Activated CD4-positive, alpha-beta memory T cell treated with anti-CD3 and anti-CD28 coated beads for 36 hours (primary cell): ENCODE measurements at regions of chr2 and their contacts with region 1.

Region 1: GRCh38 chr2:27281855-27282559 is at the start of gene TRIM54:
- DNase-seq: no peak
- H3K4me3 Mint-ChIP-seq: no peak within 1 kb of the TSS
- H3K27ac Mint-ChIP-seq: no peak within 1 kb of the TSS
- H3K4me1 Mint-ChIP-seq: peaks cover 2% of the 10 kb centered on the region
- H3K27me3 Mint-ChIP-seq: peaks cover 20% of the 10 kb centered on the region
- total RNA-seq, gene TRIM54: not detected

Region 2: GRCh38 chr2:26870585-26871095 is 411.4 kb before region 1 on chr2:
- CTCF ChIA-PET with region 1: no interaction called
- POLR2A ChIA-PET with region 1: no interaction called
- intact Hi-C with region 1: no loop called
- DNase-seq: no peak
- H3K4me3 Mint-ChIP-seq: no peak overlapping the region
- H3K27ac Mint-ChIP-seq: no peak overlapping the region
- H3K4me1 Mint-ChIP-seq: no peaks in the 10 kb centered on the region
- H3K27me3 Mint-ChIP-seq: peaks cover 14% of the 10 kb centered on the region

Region 3: GRCh38 chr2:26970244-26970920 is 311.6 kb before region 1 on chr2 and contains the start of gene MAPRE3:
- CTCF ChIA-PET with region 1: interaction called, 17 read pairs
- POLR2A ChIA-PET with region 1: no interaction called
- intact Hi-C with region 1: no loop called
- DNase-seq: peak; percentile 85
- H3K4me3 Mint-ChIP-seq: peak within 1 kb of the TSS; percentile 73
- H3K27ac Mint-ChIP-seq: no peak within 1 kb of the TSS
- H3K4me1 Mint-ChIP-seq: peaks cover 15% of the 10 kb centered on the region
- H3K27me3 Mint-ChIP-seq: peaks cover 17% of the 10 kb centered on the region
- total RNA-seq, gene MAPRE3: 4.4 TPM

Region 4: GRCh38 chr2:27123302-27124231 is 158.4 kb before region 1 on chr2 and contains the start of gene ABHD1:
- CTCF ChIA-PET with region 1: interaction called, 14 read pairs
- POLR2A ChIA-PET with region 1: no interaction called
- intact Hi-C with region 1: no loop called
- DNase-seq: peak; percentile 71
- H3K4me3 Mint-ChIP-seq: peak within 1 kb of the TSS; percentile 80
- H3K27ac Mint-ChIP-seq: no peak within 1 kb of the TSS
- H3K4me1 Mint-ChIP-seq: peaks cover 15% of the 10 kb centered on the region
- H3K27me3 Mint-ChIP-seq: peaks cover 17% of the 10 kb centered on the region
- total RNA-seq, gene ABHD1: 0.29 to 0.76 TPM

Region 5: DNA sequence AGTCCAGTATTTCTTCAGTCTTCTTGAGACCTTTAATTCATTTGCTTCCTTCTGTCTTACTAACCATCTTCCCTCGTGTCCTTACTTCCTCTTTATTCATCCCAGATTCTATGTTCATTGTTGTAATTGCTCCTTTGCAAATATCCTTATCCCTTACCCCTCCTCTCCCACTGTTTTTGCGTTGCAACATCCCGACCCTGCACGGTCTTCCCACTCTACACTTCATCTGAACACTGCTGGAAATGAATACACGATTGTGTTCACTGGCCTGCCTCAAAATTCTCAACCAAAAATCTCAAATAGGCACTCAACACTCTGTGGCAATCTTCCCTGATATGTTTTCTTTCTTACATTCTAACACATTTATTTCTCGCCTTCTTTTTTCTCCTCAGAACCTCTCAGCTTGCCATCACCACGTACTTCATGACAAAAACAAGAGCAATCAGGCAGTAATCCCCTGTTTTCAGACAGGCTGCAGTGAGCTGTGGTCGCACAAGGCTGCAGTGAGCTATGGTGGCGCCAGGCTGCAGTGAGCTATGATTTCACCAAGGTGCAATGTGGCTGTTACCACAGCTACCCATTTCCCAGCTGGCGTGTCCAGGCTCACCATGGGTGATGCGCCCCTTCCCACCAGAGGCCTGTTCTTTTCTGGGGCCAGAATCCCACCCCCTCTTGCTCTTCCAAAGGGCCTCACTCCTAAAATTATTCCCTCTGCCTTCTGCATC is 107.5 kb before region 1 on chr2:
- CTCF ChIA-PET with region 1: interaction called, 45 read pairs
- POLR2A ChIA-PET with region 1: no interaction called
- intact Hi-C with region 1: no loop called
- DNase-seq: no peak
- H3K4me3 Mint-ChIP-seq: no peak overlapping the region
- H3K27ac Mint-ChIP-seq: no peak overlapping the region
- H3K4me1 Mint-ChIP-seq: peaks cover 2% of the 10 kb centered on the region
- H3K27me3 Mint-ChIP-seq: peaks cover 7% of the 10 kb centered on the region

Region 6: GRCh38 chr2:27264753-27265535 is 17.1 kb before region 1 on chr2:
- CTCF ChIA-PET with region 1: interaction called, 94 read pairs
- POLR2A ChIA-PET with region 1: interaction called, 3 read pairs
- intact Hi-C with region 1: loop called (anchors 2 kb)
- DNase-seq: peak; percentile 82
- H3K4me3 Mint-ChIP-seq: peak overlapping the region; percentile 72
- H3K27ac Mint-ChIP-seq: no peak overlapping the region
- H3K4me1 Mint-ChIP-seq: peaks cover 23% of the 10 kb centered on the region
- H3K27me3 Mint-ChIP-seq: peaks cover 42% of the 10 kb centered on the region

Region 7: DNA sequence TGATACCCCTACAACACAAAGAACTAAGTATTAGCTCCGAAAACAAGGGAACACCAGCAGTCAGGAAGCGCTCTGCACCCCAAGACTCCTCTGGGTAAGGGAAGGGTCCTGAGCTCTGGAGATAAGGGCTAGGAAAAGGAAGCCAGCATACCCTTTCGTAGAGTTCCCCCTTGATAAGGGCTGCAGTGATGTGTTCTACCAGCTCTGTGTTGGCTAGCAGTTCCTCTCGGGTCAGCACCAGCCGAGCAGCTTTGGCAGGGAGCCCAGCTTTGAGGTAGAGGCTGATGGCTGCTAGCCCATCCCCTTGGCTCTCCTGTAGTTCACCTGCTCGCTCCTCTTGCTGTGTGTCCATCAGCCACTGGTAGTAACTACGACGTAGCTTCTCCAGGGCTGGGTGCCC is 179.1 kb after region 1 on chr2:
- CTCF ChIA-PET with region 1: no interaction called
- POLR2A ChIA-PET with region 1: no interaction called
- intact Hi-C with region 1: no loop called
- DNase-seq: no peak
- H3K4me3 Mint-ChIP-seq: no peak overlapping the region
- H3K27ac Mint-ChIP-seq: no peak overlapping the region
- H3K4me1 Mint-ChIP-seq: no peaks in the 10 kb centered on the region
- H3K27me3 Mint-ChIP-seq: no peaks in the 10 kb centered on the region